Posterior vena cava (tissue), 2 donors: ENCODE measurements at regions of chr3 and their contacts with region 1.

Region 1: GRCh38 chr3:188230962-188231361 is 77.0 kb downstream of the LPP start:
- DNase-seq: no peak

Region 2: DNA sequence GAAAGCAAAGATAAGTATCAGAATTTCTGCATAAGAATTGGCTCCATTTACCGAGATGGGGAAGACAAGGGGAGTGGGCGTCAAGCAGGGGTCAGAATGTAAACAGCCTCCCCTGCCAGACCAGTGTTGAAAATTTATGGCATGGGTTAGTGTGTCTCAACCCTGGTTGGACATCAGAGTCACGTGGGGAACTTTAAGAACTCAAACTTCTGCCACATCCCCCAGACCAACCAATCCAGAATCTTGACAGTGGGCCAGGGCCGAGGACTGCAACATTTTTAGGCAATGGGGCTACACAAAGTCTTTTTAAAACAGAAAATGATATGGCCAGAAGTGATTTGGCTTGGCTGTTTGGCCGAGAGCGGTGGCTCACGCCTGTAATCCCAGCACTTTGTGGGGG is 925.1 kb before region 1 on chr3:
- intact Hi-C with region 1: no loop called
- DNase-seq: no peak

Region 3: DNA sequence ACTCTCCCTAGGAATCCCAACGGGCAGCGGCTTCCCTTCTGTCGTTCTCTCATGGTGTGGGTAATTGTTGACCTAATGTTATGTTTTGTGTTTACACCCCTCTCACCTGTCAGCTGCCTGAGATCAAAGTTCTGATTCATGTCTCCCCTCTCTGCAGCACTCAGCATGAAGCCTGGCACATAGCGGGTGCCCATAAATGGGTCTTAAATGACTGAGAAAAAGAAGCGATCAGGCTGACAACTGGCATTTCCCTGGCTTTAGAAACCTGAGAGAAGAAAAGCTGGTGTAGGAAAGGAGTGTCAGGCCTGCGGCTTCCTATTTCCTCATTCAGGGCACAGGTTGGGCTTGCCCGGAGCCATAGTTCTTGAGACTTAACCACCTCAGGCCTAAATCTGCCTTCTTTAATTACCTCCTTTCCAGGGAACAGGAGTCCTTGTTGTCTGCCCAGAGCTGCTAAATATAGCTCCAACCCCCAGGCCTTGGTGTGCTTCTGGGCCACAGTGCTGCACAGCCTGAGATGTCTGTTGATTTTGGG is 45.2 kb before region 1 on chr3:
- intact Hi-C with region 1: loop called in 1 of 2 experiments (anchors 2 kb)
- DNase-seq: no peak

Region 4: GRCh38 chr3:188262913-188263683 is 32.1 kb after region 1 on chr3:
- intact Hi-C with region 1: loop called in 1 of 2 experiments (anchors 5 kb)
- DNase-seq: no peak

Region 5: DNA sequence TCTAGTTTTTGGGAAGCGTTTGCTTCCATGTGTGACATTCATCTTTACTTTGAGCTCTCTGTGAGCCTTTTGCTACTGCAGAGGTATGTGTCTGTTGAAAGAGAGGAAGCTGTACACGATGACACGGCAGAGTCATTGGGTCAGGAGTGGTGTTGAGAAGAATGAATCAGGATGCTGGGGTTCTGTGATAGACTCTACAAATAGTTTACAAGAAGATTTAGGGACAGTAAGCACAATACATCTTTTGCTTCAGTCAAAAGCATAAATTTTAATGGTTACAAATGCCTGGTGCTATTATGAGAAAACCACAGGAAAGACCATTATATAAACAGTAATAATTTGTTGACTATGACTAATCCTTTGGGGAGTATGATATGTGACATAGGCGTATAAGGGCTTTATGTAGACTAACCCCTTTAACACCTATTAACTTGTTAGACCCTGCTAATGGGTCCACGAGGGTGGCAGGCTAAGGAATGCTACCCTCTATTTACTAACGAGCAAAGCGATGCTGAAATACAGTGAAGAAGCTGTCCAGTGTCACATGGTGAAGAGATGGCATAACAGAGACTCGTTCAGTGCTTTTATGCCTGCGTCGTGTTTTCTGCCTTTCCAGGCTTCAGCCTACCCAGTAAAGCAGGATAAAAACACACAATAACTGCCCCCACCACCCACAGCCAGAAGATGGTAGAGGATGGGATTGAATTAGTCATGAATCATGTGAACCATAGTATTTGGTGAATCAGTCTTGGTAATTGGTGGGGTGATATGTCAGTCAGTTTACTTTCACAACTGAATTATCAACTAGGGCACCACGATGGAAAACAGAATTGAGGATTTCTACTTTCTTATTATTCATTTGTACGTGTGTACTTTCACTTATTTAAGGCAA is 41.8 kb after region 1 on chr3:
- intact Hi-C with region 1: loop called (anchors 1 to 5 kb)
- DNase-seq: no peak

Region 6: DNA sequence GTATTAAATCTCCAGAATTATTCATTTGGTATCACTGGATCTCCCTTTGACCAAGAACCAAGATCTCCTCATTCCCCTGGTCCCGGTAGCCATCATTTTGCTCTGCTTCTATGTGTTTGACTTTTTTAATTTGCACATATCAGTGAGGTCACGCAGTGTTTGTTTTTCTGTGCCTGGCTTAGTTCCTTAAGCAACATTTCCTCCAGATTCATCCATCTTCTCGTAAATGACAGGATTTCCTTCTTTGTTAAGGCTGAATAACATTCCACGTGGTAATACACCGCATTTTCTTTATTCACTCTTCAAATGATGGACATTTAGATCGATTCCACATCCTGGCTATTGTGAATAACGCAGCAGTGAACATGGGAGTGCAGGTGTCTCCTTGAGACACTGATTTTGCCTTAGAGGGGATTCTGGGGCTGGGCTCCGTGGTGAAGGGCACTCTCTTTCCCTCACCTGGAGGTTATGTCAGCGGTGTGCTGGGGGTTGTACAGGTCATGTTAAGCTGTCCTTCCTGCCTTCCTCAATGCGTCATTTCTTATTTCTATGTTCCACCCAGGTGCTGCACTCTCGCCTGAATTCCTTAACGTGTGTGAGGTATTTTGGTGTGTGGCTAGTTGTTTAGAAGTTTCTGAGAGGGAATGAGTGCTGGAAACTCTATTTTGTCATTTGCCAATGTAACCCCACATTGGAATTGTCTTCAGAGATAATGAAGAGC is 135.2 kb after region 1 on chr3:
- intact Hi-C with region 1: no loop called
- DNase-seq: no peak

Region 7: GRCh38 chr3:188533612-188534357 is 302.8 kb after region 1 on chr3:
- intact Hi-C with region 1: no loop called
- DNase-seq: no peak